ENCODE measurements at regions of chr2 and their contacts with region 1.

Region 1: DNA sequence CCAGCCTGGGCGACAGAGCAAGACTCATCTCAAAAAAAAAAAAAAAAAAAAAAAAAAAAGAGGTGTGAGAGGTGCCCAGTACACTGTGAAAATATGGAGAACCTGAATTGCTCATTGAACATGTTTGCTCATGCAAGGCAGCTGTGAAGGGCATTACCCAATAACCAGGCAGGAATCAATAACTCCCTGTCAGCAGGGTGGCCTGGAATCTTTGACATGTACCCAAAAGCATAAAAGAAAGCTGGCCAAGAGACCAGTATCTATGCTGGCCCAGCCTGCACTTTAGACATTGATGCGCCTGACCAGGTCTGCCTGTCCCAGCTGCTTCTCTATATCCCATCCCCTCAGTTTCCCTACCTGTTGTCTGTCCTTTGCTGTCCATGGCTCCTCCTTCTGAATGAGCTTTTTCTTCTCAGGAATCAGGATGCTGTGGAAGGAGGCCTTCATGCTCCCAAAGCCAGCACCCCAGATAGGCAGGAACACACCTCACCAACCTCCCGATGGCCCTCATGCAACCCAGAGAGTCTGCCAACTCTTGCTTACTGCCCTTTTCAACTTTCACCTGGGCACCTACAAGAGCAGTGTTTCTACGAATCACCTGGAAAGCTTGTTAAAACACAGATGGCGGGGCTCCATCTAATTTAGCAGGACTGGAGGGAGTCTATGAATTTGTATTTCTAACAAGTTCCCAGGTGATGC is 83.4 kb upstream of the PPP1CB start:
- DNase-seq: no peak
- ATAC-seq: no peak
- H3K4me3 ChIP-seq: no peak overlapping the region
- H3K27ac ChIP-seq: no peak overlapping the region
- H3K4me1 ChIP-seq: peaks cover 0 to 6% of the 10 kb centered on the region in 2 donors
- H3K27me3 ChIP-seq: no peaks in the 10 kb centered on the region

Region 2: DNA sequence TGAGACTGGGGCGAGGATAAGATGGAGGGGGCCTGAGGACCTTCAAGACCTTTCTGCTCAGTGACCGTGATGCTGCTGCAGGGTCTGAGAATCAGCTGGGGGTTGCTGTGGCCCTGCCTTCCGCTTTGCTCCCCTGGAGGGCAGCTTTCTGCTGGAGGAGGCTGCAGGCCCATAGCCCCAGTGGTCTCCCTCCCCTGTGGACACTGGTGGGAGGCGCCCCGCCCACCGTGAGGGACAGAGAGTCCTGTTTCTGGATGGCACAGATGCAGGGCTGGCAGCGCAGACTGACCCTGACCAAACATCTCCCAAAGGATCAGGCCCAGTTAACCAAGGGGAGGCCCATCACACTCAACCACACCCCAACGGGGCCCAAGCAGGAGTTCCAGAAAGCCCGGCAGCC is 129.6 kb before region 1 on chr2:
- intact Hi-C with region 1: no loop called
- DNase-seq: no peak
- ATAC-seq: no peak
- H3K4me3 ChIP-seq: no peak overlapping the region
- H3K27ac ChIP-seq: no peak overlapping the region
- H3K4me1 ChIP-seq: no peaks in the 10 kb centered on the region
- H3K27me3 ChIP-seq: no peaks in the 10 kb centered on the region

Region 3: DNA sequence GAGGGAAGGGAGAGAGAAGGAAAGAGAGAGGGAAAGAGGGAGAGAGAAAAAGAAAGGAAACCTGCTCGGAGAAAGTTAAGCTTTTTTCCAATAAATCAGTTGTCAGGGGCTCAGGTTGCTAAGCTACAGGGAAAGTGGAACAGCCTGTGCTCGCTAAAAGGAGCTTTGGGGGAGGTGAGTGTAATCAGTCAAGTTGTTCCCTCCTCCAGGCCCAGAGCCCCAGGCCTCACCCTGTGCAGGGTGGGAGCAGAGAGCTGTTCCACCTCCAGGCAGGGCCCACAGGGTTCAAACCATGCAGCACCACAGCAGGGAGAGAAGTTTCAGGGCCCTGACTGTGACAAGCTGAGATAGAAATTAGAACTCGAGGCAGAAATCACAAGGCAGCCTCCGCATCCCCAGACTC is 27.0 kb after region 1 on chr2:
- intact Hi-C with region 1: loop called in 1 of 2 experiments (anchors 2 kb)
- DNase-seq: no peak
- ATAC-seq: no peak
- H3K4me3 ChIP-seq: no peak overlapping the region
- H3K27ac ChIP-seq: no peak overlapping the region
- H3K4me1 ChIP-seq: no peaks in the 10 kb centered on the region
- H3K27me3 ChIP-seq: no peaks in the 10 kb centered on the region

Measured in aorta (tissue), 5 donors.